AG04450 (cell line): ENCODE measurements at regions of chr18 and their contacts with region 1.

Region 1: DNA sequence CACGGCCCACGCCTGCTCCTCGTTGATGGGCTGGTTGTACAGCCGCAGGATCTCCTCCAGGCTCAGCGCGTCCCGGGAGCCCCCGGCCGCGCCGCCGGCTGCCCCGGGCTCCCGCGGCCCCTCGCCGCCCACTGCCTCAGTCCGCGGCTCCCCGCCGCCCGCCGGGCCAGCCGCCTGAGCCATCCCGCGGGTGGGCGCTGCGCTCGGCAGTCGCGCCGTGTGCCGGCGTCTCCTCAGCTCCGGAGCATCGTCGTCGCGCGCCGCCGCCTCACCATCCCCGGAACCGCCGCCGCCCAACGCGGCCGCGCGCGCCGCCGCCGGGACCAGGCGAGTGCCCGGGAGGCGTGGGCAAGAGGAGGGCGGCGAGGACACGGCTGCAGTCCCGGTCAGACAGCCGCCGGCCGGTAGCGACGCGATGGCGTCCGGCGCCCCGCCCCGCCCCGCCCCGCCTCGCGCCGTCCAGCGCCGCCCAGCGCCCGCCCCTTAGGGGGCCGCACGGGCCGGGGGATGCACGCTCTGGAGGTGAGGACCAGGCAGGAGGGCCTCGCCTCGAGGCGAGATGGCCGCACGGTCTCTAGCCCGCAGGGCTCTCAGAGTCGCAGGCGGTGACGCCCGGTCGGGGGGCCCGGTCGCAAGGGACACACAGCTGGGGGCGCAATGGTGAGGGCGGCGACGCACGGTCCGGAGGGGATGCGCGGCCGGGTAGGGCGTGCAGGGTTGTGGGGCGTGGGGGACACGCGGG is at the start of gene SPIRE1:
- DNase-seq: no peak
- H3K4me3 ChIP-seq: peak within 1 kb of the TSS; percentile 68
- H3K27ac ChIP-seq: peak within 1 kb of the TSS; percentile 21
- H3K27me3 ChIP-seq: no peaks in the 10 kb centered on the region
- CTCF ChIP-seq: no peak
- polyA plus RNA-seq, gene SPIRE1: 16.3 and 22.2 TPM in 2 replicates

Region 2: GRCh38 chr18:12460874-12461273 is 197.0 kb before region 1 on chr18:
- CTCF ChIA-PET with region 1: no interaction called
- POLR2A ChIA-PET with region 1: no interaction called
- DNase-seq: no peak
- H3K4me3 ChIP-seq: no peak overlapping the region
- H3K27ac ChIP-seq: no peak overlapping the region
- H3K27me3 ChIP-seq: no peaks in the 10 kb centered on the region
- CTCF ChIP-seq: no peak

Region 3: DNA sequence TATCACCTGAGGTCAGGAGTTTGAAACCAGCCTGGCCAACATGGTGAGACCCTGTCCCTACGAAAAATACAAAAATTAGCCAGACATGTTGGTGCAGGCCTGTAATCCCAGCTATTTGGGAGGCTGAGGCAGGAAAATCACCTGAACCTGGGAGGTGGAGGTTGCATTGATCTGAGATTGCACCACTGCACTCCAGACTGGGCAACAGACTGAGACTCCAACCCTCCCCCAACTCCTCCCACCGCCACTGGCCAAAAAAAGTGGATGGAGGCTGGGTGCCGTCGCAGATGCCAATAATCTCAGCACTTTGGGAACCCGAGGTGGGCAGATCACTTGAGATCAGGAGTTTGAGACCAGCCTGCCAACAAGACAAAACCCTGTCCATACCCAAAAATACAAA is 10.2 kb after region 1 on chr18:
- CTCF ChIA-PET with region 1: interaction called, 17 read pairs
- POLR2A ChIA-PET with region 1: no interaction called
- DNase-seq: no peak
- H3K4me3 ChIP-seq: no peak overlapping the region
- H3K27ac ChIP-seq: no peak overlapping the region
- H3K27me3 ChIP-seq: no peaks in the 10 kb centered on the region
- CTCF ChIP-seq: no peak

Region 4: DNA sequence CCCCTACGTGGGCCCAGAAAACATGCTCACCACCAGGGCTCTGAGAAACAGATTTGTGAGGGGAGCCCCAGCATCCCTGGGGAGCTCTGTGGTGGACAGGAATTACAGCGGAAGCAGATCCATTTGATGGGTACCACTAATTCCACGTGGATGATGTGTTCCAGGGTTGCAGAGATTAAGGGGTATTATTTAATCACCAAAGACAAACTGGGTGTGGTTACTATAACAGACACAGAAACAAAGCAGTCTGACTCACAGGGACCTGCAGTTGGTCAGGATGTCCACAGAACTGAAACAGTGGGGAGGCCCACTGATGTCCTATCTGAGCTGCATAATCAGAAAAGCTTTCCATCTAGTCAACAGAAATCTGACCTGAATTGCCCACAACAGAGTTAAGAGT is 110.8 kb after region 1 on chr18:
- CTCF ChIA-PET with region 1: no interaction called
- POLR2A ChIA-PET with region 1: no interaction called
- DNase-seq: no peak
- H3K4me3 ChIP-seq: no peak overlapping the region
- H3K27ac ChIP-seq: no peak overlapping the region
- H3K27me3 ChIP-seq: no peaks in the 10 kb centered on the region
- CTCF ChIP-seq: no peak